ENCODE measurements at regions of chr22 and their contacts with region 1.

Region 1: DNA sequence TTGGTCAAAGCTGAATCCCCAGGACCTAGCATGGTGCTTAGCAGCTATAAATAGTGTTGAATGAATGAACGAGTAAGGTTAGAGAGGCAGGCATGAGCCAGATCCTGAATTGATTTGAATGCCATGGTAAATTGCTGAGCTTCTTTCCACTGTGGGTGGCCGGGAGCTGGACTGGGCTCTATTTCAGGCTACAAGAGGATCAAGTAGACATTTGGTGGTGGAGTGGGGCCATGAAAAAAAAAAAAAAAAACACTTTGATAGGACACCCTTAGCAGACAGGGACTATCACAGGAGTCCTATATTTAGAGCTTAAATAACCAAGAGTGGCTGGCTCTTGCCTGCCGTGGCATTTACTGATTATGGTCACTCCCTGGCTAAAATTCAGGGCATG is 77.6 kb downstream of the MIAT start:
- DNase-seq: no peak
- H3K4me3 ChIP-seq: no peak overlapping the region
- H3K27ac ChIP-seq: peak overlapping the region; percentile 54
- H3K4me1 ChIP-seq: peaks cover 17% of the 10 kb centered on the region
- H3K27me3 ChIP-seq: no peaks in the 10 kb centered on the region
- CTCF ChIP-seq: no peak
- POLR2A ChIP-seq: no peak

Region 2: DNA sequence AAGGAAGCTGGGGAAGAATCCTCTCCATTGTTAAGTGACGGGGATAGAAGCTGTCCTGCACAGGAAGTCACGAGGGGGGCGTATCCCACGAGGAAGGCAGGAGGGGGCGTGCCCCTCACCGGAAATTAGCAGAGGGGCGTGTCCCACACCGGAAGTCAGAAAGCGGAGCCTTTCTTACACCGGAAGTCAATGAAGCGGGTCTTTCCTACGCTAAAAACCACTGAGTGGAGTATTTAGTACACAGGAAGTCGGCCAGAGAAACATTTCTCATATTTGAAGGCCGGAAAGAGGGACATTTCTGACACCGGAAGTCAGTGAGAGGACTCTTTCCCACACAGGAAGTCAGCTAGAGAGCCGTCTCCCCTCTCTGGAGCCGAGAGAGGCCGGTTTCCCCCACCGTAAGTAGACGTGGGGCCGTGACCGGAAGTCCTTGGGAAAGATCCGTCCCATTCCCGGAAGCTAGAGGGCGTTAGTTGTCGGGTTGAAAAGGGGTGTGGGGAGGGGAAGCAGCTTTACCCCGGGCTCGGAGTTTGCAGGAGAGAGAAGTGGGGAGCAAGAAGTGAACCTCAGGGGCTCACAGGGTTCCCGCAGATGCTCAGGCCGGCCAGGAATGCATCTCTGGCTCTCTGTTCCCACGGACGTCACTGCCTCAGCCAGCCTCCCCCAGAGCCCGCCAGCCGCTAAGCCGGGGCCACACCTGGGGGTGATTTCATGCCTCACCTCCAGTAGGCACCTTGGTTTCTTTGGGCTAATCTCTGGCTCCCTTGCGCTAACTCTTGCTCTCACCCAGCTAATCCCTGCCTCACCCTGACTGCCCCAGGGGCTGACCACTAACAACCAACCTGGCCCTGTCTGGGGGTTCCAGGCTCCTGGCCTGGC is 62.2 kb before region 1 on chr22:
- CTCF ChIA-PET with region 1: interaction called, 3 read pairs
- POLR2A ChIA-PET with region 1: no interaction called
- dilution Hi-C with region 1: no loop called
- intact Hi-C with region 1: loop called (anchors 5 kb)
- DNase-seq: peak; percentile 76
- H3K4me3 ChIP-seq: peak overlapping the region; percentile 52 to 76 (median 56)
- H3K27ac ChIP-seq: peak overlapping the region; percentile 93
- H3K4me1 ChIP-seq: peaks cover 21% of the 10 kb centered on the region
- H3K27me3 ChIP-seq: no peaks in the 10 kb centered on the region
- CTCF ChIP-seq: peak; percentile 23 to 29
- POLR2A ChIP-seq: peak; percentile 82

Region 3: GRCh38 chr22:26718905-26719304 is 16.1 kb before region 1 on chr22:
- CTCF ChIA-PET with region 1: interaction called, 3 read pairs
- POLR2A ChIA-PET with region 1: interaction called, 3 read pairs
- dilution Hi-C with region 1: no loop called
- intact Hi-C with region 1: loop called (anchors 2 kb)
- DNase-seq: peak; percentile 42
- H3K4me3 ChIP-seq: no peak overlapping the region
- H3K27ac ChIP-seq: peak overlapping the region; percentile 48
- H3K4me1 ChIP-seq: peaks cover 15% of the 10 kb centered on the region
- H3K27me3 ChIP-seq: no peaks in the 10 kb centered on the region
- CTCF ChIP-seq: no peak
- POLR2A ChIP-seq: no peak

Region 4: GRCh38 chr22:26744892-26745808 is 10.1 kb after region 1 on chr22:
- CTCF ChIA-PET with region 1: interaction called, 10 read pairs
- POLR2A ChIA-PET with region 1: no interaction called
- dilution Hi-C with region 1: no loop called
- intact Hi-C with region 1: no loop called
- DNase-seq: no peak
- H3K4me3 ChIP-seq: no peak overlapping the region
- H3K27ac ChIP-seq: no peak overlapping the region
- H3K4me1 ChIP-seq: peaks cover 5% of the 10 kb centered on the region
- H3K27me3 ChIP-seq: no peaks in the 10 kb centered on the region
- CTCF ChIP-seq: no peak
- POLR2A ChIP-seq: no peak

Measured in endothelial cell of umbilical vein (primary cell).